ENCODE measurements at regions of chr11 and their contacts with region 1.

Region 1: GRCh38 chr11:95611827-95612226 is 177.8 kb downstream of the FAM76B start:
- DNase-seq: no peak
- H3K4me3 Mint-ChIP-seq: no peak overlapping the region
- H3K27ac Mint-ChIP-seq: no peak overlapping the region
- H3K4me1 Mint-ChIP-seq: no peaks in the 10 kb centered on the region
- H3K27me3 Mint-ChIP-seq: no peaks in the 10 kb centered on the region

Region 2: GRCh38 chr11:95584589-95584988 is 27.2 kb before region 1 on chr11:
- intact Hi-C with region 1: loop called (anchors 5 kb)
- DNase-seq: peak; percentile 32
- H3K4me3 Mint-ChIP-seq: no peak overlapping the region
- H3K27ac Mint-ChIP-seq: no peak overlapping the region
- H3K4me1 Mint-ChIP-seq: peaks cover 20% of the 10 kb centered on the region
- H3K27me3 Mint-ChIP-seq: no peaks in the 10 kb centered on the region

Region 3: GRCh38 chr11:95652002-95652472 is 40.2 kb after region 1 on chr11:
- intact Hi-C with region 1: loop called (anchors 5 kb)
- DNase-seq: no peak
- H3K4me3 Mint-ChIP-seq: no peak overlapping the region
- H3K27ac Mint-ChIP-seq: no peak overlapping the region
- H3K4me1 Mint-ChIP-seq: peaks cover 2% of the 10 kb centered on the region
- H3K27me3 Mint-ChIP-seq: no peaks in the 10 kb centered on the region

Measured in activated CD4-positive, alpha-beta T cell treated with anti-CD3 and anti-CD28 coated beads, Interleukin-2, amount 10 ng/mL, durations not matched to agents 24 days and 14 days (primary cell).